ENCODE measurements at regions of chr10 and their contacts with region 1.

Region 1: DNA sequence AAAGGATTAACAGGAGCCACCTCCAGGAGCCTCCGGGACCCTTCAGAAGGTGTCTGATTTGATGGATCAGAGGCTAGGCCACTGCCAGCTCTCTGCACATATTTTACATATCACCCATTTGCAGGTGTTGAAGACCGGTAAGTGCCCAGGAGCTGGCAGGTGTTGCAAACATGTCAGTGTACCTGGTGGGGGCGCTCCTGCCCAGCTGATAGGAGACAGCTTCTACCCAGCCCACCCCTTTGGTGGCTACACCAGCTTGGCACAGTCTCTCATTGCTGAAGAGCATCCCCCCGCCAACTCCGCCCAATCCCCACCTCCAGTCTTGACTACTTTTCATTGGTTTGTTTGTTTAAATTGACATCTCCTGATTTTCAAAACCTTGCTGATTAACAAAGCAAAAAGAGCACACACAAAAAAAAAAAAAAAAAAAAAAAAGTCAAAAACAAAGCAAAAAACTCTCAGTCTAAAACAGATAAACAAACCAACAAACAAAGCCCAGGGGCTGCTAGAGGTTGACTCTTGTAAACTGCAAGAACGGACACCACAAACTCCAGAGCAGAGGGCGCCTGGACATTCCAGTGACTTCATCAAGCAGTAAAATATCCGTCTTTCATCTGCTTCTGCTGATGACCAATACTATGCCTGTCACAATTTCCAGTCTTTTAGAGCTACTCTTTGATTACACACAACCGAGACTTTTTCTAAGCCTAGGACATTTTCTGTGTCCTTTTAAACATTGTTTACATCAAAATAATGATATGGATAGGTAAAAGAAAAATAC is 275.3 kb downstream of the NRG3 start:
- DNase-seq: peak; percentile 83 to 92
- H3K4me3 ChIP-seq: no peak overlapping the region
- H3K27ac ChIP-seq: no peak overlapping the region
- H3K4me1 ChIP-seq: peaks cover 0 to 2% (median 0%) of the 10 kb centered on the region in 4 experiments; a peak in 1 of 7 replicates
- H3K27me3 ChIP-seq: no peaks in the 10 kb centered on the region
- CTCF ChIP-seq: peak; percentile 87 to 95 (median 94)
- EP300 ChIP-seq: no peak
- POLR2A ChIP-seq: no peak
- RAD21 ChIP-seq: peak; percentile 98

Region 2: DNA sequence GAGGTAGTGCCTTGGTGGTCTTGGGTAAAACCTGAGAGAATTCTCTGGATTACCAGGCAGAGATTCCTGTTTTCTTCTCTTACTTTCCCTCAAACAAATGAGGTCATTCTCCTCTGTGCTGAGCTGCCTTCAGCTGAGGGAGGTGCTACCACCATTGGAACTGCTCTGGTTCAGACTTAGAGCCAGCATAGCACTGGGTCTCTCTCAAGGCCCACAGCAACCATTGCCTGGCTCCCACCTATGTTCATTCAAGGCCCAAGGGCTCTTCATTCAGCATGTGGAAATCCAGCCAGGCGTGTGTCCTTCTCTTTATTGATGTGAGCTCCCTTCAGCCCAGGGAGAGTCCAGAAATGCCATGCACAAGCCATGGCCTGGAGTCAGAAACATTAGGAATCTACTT is 14.2 kb before region 1 on chr10:
- CTCF ChIA-PET with region 1: interaction called, 12 read pairs
- POLR2A ChIA-PET with region 1: no interaction called
- DNase-seq: no peak
- H3K4me3 ChIP-seq: no peak overlapping the region
- H3K27ac ChIP-seq: no peak overlapping the region; the same call in 1 of the 2 replicates
- H3K4me1 ChIP-seq: no peaks in the 10 kb centered on the region
- H3K27me3 ChIP-seq: no peaks in the 10 kb centered on the region
- CTCF ChIP-seq: no peak
- EP300 ChIP-seq: peak in 1 of 2 experiments; percentile 66; a peak in 1 of 3 replicates
- POLR2A ChIP-seq: no peak
- RAD21 ChIP-seq: no peak

Region 3: DNA sequence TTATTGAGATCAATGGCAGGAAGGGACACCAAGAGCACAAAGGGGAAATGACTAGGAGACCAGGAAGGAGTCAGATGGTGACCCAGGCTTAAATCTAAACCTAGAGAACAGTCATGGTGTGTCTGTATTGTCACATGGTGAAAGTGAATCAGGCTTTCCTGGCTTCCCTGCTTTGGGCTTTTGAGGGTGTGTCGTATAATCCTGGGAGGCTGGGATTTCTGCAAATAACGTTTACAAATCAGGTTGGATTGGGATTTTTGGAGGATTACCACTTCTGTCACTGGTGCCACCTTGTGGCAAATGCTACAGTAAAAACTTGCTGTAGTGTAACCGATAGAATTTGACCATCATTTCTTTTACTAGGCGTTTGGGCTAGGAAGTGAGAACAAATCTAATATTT is 227.3 kb after region 1 on chr10:
- CTCF ChIA-PET with region 1: interaction called, 56 read pairs
- POLR2A ChIA-PET with region 1: no interaction called
- DNase-seq: peak in 1 of 2 experiments; percentile 53
- H3K4me3 ChIP-seq: no peak overlapping the region
- H3K27ac ChIP-seq: no peak overlapping the region
- H3K4me1 ChIP-seq: no peaks in the 10 kb centered on the region
- H3K27me3 ChIP-seq: no peaks in the 10 kb centered on the region
- CTCF ChIP-seq: peak in 2 of 3 experiments; percentile 50 to 51; a peak in 3 of 4 replicates
- EP300 ChIP-seq: no peak
- POLR2A ChIP-seq: no peak
- RAD21 ChIP-seq: peak; percentile 61 to 73

Measured in H1 (cell line).